T-cell (primary cell): ENCODE measurements at regions of chrX and their contacts with region 1.

Region 1: DNA sequence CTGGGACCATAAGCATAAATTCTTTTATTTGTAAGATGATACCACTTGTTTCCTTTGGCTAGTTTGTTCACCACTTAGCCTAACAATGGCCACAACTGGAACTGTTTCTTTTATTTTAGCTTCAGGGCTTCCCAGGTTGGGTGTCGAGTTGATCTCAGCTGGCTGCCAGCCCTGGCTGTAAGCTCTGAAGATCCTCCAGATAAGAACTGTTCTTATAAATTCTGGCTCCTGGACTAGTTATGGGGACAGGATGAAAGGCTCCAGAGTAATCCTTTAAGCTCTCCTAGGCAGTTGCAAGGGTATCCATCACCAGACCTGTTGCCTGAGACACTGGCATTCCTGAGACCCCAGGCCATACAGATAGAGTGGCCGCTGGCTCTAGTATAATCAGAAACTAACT is 129.4 kb upstream of the ACSL4 start:
- DNase-seq: no peak
- ATAC-seq: no peak
- H3K4me3 ChIP-seq: no peak overlapping the region
- H3K4me3 Mint-ChIP-seq: no peak overlapping the region
- H3K27ac ChIP-seq: no peak overlapping the region
- H3K27ac Mint-ChIP-seq: no peak overlapping the region
- H3K4me1 ChIP-seq: no peaks in the 10 kb centered on the region
- H3K4me1 Mint-ChIP-seq: no peaks in the 10 kb centered on the region
- H3K27me3 ChIP-seq: no peaks in the 10 kb centered on the region
- H3K27me3 Mint-ChIP-seq: peaks cover 2 to 18% of the 10 kb centered on the region in 2 donors

Region 2: GRCh38 chrX:109720947-109721346 is 141.5 kb before region 1 on chrX:
- CTCF ChIA-PET with region 1: no interaction called
- POLR2A ChIA-PET with region 1: no interaction called
- DNase-seq: no peak
- ATAC-seq: no peak
- H3K4me3 ChIP-seq: no peak overlapping the region
- H3K4me3 Mint-ChIP-seq: no peak overlapping the region
- H3K27ac ChIP-seq: no peak overlapping the region
- H3K27ac Mint-ChIP-seq: no peak overlapping the region
- H3K4me1 ChIP-seq: no peaks in the 10 kb centered on the region
- H3K4me1 Mint-ChIP-seq: peaks cover 4 to 41% (median 27%) of the 10 kb centered on the region in 3 donors
- H3K27me3 ChIP-seq: no peaks in the 10 kb centered on the region
- H3K27me3 Mint-ChIP-seq: no peaks in the 10 kb centered on the region

Region 3: GRCh38 chrX:110015032-110015431 is 152.6 kb after region 1 on chrX:
- CTCF ChIA-PET with region 1: no interaction called
- POLR2A ChIA-PET with region 1: interaction called in 1 of 2 experiments, 14 read pairs
- DNase-seq: no peak
- ATAC-seq: no peak
- H3K4me3 ChIP-seq: no peak overlapping the region
- H3K4me3 Mint-ChIP-seq: no peak overlapping the region
- H3K27ac ChIP-seq: no peak overlapping the region
- H3K27ac Mint-ChIP-seq: no peak overlapping the region
- H3K4me1 ChIP-seq: peaks cover 0 to 2% of the 10 kb centered on the region in 2 experiments
- H3K4me1 Mint-ChIP-seq: peaks cover 5 to 31% (median 19%) of the 10 kb centered on the region in 3 donors
- H3K27me3 ChIP-seq: no peaks in the 10 kb centered on the region
- H3K27me3 Mint-ChIP-seq: no peaks in the 10 kb centered on the region